GM12878 (cell line): ENCODE measurements at regions of chr1 and their contacts with region 1.

Region 1: GRCh38 chr1:211654838-211655787 is 20.3 kb downstream of the NEK2 start:
- DNase-seq: no peak
- ATAC-seq: peak; percentile 99
- H3K4me3 ChIP-seq: no peak overlapping the region
- H3K27ac ChIP-seq: no peak overlapping the region
- H3K4me1 ChIP-seq: no peaks in the 10 kb centered on the region
- H3K27me3 ChIP-seq: peaks cover 0 to 2% of the 10 kb centered on the region in 2 experiments; a peak in 1 of 4 replicates
- CTCF ChIP-seq: peak; percentile 90 to 97 (median 94); a peak in 5 of 6 replicates
- EP300 ChIP-seq: no peak
- POLR2A ChIP-seq: no peak
- RAD21 ChIP-seq: peak; percentile 98

Region 2: DNA sequence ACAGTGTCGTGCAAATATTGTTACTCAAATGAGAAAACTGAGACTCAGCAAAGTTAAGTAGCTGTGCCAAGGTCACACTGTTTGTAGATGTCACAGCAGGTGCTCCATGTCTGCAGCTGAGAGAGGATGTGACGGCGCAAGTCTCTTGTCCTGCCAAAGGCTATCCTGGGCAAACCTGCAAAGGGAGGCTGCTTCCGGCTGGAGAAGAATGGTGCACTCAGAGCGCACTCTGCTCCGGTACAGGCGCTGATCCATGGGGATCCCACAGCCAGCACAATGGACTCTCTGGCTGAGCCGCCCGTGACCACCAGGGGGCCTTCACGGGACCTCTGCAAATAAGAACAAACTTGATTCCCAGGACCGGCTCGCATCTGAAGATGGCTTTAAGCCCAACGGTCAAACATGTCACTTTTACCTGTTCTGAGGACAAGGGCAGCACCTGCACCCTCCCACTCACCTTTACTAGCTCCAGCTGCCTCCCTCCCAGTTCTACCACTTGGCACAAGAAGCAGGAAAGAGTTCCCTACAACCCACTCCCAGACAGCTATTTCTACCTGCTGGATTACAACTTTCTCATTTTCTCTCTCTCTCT is 185.1 kb before region 1 on chr1:
- CTCF ChIA-PET with region 1: interaction called, 43 read pairs
- POLR2A ChIA-PET with region 1: no interaction called
- RAD21 ChIA-PET with region 1: no interaction called
- SMC1A ChIA-PET with region 1: interaction called, 4 read pairs
- in situ Hi-C with region 1: no loop called
- intact Hi-C with region 1: loop called (anchors 1 kb)
- DNase-seq: no peak
- ATAC-seq: peak; percentile 94
- H3K4me3 ChIP-seq: no peak overlapping the region
- H3K27ac ChIP-seq: no peak overlapping the region
- H3K4me1 ChIP-seq: no peaks in the 10 kb centered on the region
- H3K27me3 ChIP-seq: peaks cover 0 to 3% of the 10 kb centered on the region in 2 experiments; a peak in 1 of 4 replicates
- CTCF ChIP-seq: peak; percentile 79 to 93 (median 85)
- EP300 ChIP-seq: no peak
- POLR2A ChIP-seq: no peak
- RAD21 ChIP-seq: peak; percentile 37

Region 3: DNA sequence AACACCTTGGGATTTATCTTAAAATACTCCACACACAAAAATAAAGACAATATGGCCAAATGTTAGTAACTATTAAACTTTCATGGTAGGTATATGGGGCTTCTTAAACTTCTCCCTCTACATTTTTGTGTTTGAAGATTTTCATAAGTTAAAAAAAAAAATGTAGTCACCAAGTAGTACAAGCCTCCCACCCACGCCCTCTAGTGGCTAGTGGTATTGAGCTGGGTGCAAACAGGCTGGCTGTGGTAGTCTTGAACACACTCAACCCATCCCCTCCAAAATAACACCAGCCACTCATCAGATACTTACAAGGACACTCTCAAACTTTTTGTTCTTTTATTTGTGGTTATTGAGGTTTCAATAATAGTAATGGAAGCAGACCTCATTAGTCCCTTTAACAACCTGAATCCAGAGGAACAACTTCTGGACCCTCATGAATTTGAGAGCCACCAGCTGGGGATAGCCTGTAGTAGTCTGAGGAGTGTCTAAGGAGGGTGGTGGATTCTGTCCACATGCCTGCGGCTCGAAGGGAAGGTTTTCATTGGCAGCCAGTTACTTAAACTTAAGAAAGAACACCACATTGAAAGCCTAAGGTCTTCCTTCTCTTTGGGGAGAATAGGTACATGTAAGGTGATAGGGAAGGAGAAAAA is 178.8 kb before region 1 on chr1:
- CTCF ChIA-PET with region 1: interaction called, 43 read pairs
- POLR2A ChIA-PET with region 1: no interaction called
- RAD21 ChIA-PET with region 1: interaction called, 3 read pairs
- SMC1A ChIA-PET with region 1: interaction called, 3 read pairs
- in situ Hi-C with region 1: no loop called
- intact Hi-C with region 1: no loop called
- DNase-seq: peak; percentile 20
- ATAC-seq: peak; percentile 96
- H3K4me3 ChIP-seq: no peak overlapping the region
- H3K27ac ChIP-seq: no peak overlapping the region
- H3K4me1 ChIP-seq: no peaks in the 10 kb centered on the region
- H3K27me3 ChIP-seq: peaks cover 1 to 7% of the 10 kb centered on the region in 2 experiments; a peak in 2 of 4 replicates
- CTCF ChIP-seq: peak; percentile 84 to 91 (median 90)
- EP300 ChIP-seq: no peak
- POLR2A ChIP-seq: no peak
- RAD21 ChIP-seq: peak; percentile 75

Region 4: DNA sequence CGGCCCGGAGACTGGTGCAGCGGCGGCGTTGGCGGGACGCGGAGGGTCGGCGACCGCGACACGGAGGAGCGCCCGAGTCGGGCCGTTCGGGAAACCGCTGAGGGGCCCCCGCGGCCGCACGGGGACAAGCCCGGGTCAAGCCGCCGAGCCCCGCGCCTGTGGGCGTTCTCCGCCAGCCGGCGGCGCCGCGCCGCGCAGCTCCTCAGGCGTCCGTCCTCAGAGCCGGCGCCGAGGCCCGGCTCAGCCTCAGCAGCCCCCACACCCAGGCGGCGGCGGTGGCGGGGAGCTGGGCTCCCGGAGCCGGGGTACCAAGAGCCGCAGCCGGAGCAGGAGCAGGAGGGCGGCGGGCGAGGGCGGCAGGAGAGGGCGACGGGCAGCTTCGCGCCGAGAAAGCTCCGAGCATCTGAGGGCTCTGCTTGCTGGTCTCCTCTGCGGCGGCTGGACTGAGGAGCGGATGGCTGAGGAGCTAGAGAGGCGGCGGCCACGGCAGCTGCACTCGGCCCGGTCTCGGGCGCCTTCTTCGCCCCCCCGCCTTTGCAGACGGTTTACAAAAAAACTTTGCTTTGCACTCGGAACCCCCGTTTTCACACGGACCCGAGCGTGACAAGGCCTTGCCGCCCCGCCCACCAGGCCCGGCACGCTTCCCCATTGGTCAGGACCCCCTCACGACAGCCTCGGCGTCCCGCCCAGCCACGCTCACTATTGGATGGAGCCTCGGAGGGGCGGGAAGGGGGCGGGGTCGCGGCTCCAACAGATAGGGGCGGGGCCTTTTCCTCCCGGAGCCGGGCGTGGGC is 76.3 kb before region 1 on chr1 and contains the start of gene SLC30A1:
- CTCF ChIA-PET with region 1: interaction called, 11 read pairs
- POLR2A ChIA-PET with region 1: no interaction called
- RAD21 ChIA-PET with region 1: interaction called, 5 read pairs
- SMC1A ChIA-PET with region 1: interaction called, 7 read pairs
- in situ Hi-C with region 1: no loop called
- intact Hi-C with region 1: loop called (anchors 1 kb)
- DNase-seq: peak; percentile 83
- ATAC-seq: peak; percentile 87
- H3K4me3 ChIP-seq: peak within 1 kb of the TSS; percentile 96
- H3K27ac ChIP-seq: peak within 1 kb of the TSS; percentile 84
- H3K4me1 ChIP-seq: peaks cover 23% of the 10 kb centered on the region
- H3K27me3 ChIP-seq: no peaks in the 10 kb centered on the region
- CTCF ChIP-seq: no peak
- EP300 ChIP-seq: peak in 1 of 2 experiments; percentile 27; a peak in 1 of 4 replicates
- POLR2A ChIP-seq: peak; percentile 91
- RAD21 ChIP-seq: no peak
- polyA plus RNA-seq, gene SLC30A1: 3.5 to 4.0 TPM

Region 5: DNA sequence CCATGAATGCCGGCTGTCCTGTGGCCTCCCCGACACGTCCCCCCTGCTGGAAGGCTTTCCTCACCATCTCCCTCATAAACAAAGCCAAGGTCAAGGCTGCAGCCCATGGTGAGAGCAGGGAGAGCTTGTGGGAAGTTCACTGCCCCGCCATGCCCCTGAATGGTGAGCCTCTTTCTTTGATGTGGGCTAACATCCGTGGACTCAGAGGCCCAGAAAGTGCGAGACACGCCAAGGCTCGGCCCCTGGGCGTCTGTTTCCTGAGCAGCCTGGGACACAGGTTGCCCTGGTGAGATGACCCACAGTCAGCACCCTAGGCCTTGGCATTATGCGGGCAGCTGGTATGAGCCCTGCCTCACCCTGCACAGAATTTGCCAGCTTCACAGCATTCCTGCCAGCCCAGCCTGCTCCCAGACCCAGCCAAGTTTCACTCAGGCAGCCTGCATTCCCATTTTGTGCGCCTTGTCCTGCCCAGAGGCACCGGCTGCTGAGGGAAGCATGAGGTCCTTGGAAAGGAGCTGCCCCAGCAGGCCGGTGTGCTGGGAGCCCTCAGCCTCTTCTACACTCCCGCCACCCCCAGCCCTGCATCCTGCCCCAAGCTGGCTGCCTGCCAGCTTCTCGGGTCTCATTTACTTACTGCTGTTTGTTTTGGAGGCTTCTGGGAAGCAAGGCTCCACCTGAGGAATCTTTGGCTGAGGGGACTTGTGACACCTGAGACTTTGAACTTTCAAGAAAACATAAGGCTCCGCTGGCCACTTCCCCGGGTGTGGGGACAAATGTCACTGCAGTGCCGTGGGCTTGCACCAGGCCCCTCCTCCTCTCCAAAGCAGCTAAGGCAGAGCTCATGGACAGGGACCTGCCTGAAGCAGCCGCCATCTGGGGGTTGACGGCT is 11.5 kb before region 1 on chr1:
- CTCF ChIA-PET with region 1: interaction called, 4 read pairs
- POLR2A ChIA-PET with region 1: no interaction called
- RAD21 ChIA-PET with region 1: no interaction called
- SMC1A ChIA-PET with region 1: interaction called, 11 read pairs
- in situ Hi-C with region 1: no loop called
- intact Hi-C with region 1: no loop called
- DNase-seq: no peak
- ATAC-seq: peak; percentile 47
- H3K4me3 ChIP-seq: no peak overlapping the region
- H3K27ac ChIP-seq: no peak overlapping the region
- H3K4me1 ChIP-seq: no peaks in the 10 kb centered on the region; the same call in 1 of the 2 replicates
- H3K27me3 ChIP-seq: no peaks in the 10 kb centered on the region
- CTCF ChIP-seq: no peak
- EP300 ChIP-seq: no peak
- POLR2A ChIP-seq: no peak
- RAD21 ChIP-seq: no peak

Region 6: GRCh38 chr1:211800925-211801607 is 146.0 kb after region 1 on chr1:
- CTCF ChIA-PET with region 1: no interaction called
- POLR2A ChIA-PET with region 1: no interaction called
- RAD21 ChIA-PET with region 1: no interaction called
- SMC1A ChIA-PET with region 1: no interaction called
- in situ Hi-C with region 1: no loop called
- intact Hi-C with region 1: no loop called
- DNase-seq: no peak
- ATAC-seq: no peak
- H3K4me3 ChIP-seq: no peak overlapping the region
- H3K27ac ChIP-seq: no peak overlapping the region
- H3K4me1 ChIP-seq: no peaks in the 10 kb centered on the region
- H3K27me3 ChIP-seq: no peaks in the 10 kb centered on the region
- CTCF ChIP-seq: no peak
- EP300 ChIP-seq: no peak
- POLR2A ChIP-seq: no peak
- RAD21 ChIP-seq: no peak